ENCODE measurements at regions of chr5 and their contacts with region 1.

Region 1: GRCh38 chr5:154072414-154073171 is 33.8 kb downstream of the MFAP3 start:
- DNase-seq: peak; percentile 19 to 93
- H3K4me3 ChIP-seq: no peak overlapping the region
- H3K27ac ChIP-seq: no peak overlapping the region
- H3K4me1 ChIP-seq: peaks cover 0 to 6% (median 0%) of the 10 kb centered on the region in 4 experiments; a peak in 2 of 7 replicates
- H3K27me3 ChIP-seq: no peaks in the 10 kb centered on the region
- CTCF ChIP-seq: peak; percentile 83 to 96 (median 91)
- EP300 ChIP-seq: no peak
- POLR2A ChIP-seq: no peak
- RAD21 ChIP-seq: peak; percentile 100

Region 2: DNA sequence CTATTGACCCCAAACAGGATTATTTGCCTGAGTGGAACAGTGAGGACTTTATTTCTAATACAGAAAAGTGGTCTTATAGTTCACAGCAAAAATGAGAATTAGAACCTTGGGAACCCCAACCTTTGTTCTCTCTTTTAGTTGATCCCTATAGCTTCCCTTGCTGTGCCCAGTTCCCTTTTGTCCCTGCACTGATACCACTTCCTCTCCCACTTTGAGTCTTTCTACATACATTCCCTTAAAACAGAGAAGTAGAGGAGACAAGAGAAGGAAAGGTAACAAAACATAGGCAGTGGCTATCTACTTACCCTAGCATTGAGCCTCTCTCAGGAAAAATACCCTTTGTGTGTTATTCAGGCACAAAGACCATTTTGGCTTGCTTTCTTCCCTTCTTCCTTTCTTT is 280.3 kb before region 1 on chr5:
- CTCF ChIA-PET with region 1: no interaction called
- POLR2A ChIA-PET with region 1: no interaction called
- DNase-seq: no peak
- H3K4me3 ChIP-seq: no peak overlapping the region
- H3K27ac ChIP-seq: no peak overlapping the region
- H3K4me1 ChIP-seq: no peaks in the 10 kb centered on the region
- H3K27me3 ChIP-seq: no peaks in the 10 kb centered on the region; a peak in 1 of 7 replicates
- CTCF ChIP-seq: no peak
- EP300 ChIP-seq: no peak
- POLR2A ChIP-seq: no peak
- RAD21 ChIP-seq: no peak

Region 3: GRCh38 chr5:153991168-153991567 is 81.4 kb before region 1 on chr5:
- CTCF ChIA-PET with region 1: no interaction called
- POLR2A ChIA-PET with region 1: no interaction called
- DNase-seq: no peak
- H3K4me3 ChIP-seq: no peak overlapping the region
- H3K27ac ChIP-seq: no peak overlapping the region
- H3K4me1 ChIP-seq: no peaks in the 10 kb centered on the region
- H3K27me3 ChIP-seq: no peaks in the 10 kb centered on the region
- CTCF ChIP-seq: no peak
- EP300 ChIP-seq: no peak
- POLR2A ChIP-seq: no peak
- RAD21 ChIP-seq: no peak

Region 4: GRCh38 chr5:154058055-154059038 is 14.2 kb before region 1 on chr5:
- CTCF ChIA-PET with region 1: interaction called, 33 read pairs
- POLR2A ChIA-PET with region 1: interaction called, 9 read pairs
- DNase-seq: no peak
- H3K4me3 ChIP-seq: no peak overlapping the region
- H3K27ac ChIP-seq: no peak overlapping the region
- H3K4me1 ChIP-seq: peaks cover 0 to 19% (median 2%) of the 10 kb centered on the region in 4 experiments; a peak in 2 of 7 replicates
- H3K27me3 ChIP-seq: no peaks in the 10 kb centered on the region; a peak in 1 of 7 replicates
- CTCF ChIP-seq: no peak
- EP300 ChIP-seq: no peak
- POLR2A ChIP-seq: no peak
- RAD21 ChIP-seq: no peak

Region 5: DNA sequence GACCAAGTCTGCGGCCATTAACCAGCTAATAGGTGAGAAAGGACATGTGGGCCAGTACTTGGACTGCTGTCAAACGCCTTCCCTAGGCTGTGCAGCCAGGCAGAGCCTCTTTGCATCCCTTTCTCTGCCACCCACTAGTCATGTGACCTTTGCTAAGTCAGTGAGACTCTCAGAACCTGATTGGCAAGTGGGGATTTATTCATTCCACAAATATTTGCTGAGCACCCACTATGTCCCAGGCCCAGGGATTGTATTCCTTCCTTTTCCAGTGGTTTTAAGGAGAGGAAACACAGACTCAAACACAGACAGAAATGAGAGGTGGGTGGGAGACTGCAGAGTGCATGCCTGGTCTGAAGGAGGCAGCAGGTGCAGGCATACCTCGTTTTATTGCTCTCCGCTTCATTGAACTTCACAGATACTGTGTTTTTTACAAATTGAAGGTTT is 46.3 kb after region 1 on chr5:
- CTCF ChIA-PET with region 1: interaction called, 12 read pairs
- POLR2A ChIA-PET with region 1: no interaction called
- DNase-seq: no peak
- H3K4me3 ChIP-seq: no peak overlapping the region
- H3K27ac ChIP-seq: no peak overlapping the region
- H3K4me1 ChIP-seq: peaks cover 0 to 3% (median 1%) of the 10 kb centered on the region in 4 experiments; a peak in 1 of 7 replicates
- H3K27me3 ChIP-seq: no peaks in the 10 kb centered on the region
- CTCF ChIP-seq: peak in 1 of 3 experiments; percentile 36; a peak in 1 of 4 replicates
- EP300 ChIP-seq: no peak
- POLR2A ChIP-seq: no peak
- RAD21 ChIP-seq: 0 out of 4 replicates have a peak, but pooled peaks of 1 of the 2 experiments have one; percentile 6

Region 6: GRCh38 chr5:154168395-154168794 is 95.8 kb after region 1 on chr5:
- CTCF ChIA-PET with region 1: interaction called, 211 read pairs
- POLR2A ChIA-PET with region 1: interaction called, 4 read pairs
- DNase-seq: no peak
- H3K4me3 ChIP-seq: no peak overlapping the region
- H3K27ac ChIP-seq: no peak overlapping the region
- H3K4me1 ChIP-seq: peaks cover 14 to 21% (median 15%) of the 10 kb centered on the region in 4 experiments
- H3K27me3 ChIP-seq: no peaks in the 10 kb centered on the region
- CTCF ChIP-seq: no peak
- EP300 ChIP-seq: no peak
- POLR2A ChIP-seq: no peak
- RAD21 ChIP-seq: no peak

Region 7: DNA sequence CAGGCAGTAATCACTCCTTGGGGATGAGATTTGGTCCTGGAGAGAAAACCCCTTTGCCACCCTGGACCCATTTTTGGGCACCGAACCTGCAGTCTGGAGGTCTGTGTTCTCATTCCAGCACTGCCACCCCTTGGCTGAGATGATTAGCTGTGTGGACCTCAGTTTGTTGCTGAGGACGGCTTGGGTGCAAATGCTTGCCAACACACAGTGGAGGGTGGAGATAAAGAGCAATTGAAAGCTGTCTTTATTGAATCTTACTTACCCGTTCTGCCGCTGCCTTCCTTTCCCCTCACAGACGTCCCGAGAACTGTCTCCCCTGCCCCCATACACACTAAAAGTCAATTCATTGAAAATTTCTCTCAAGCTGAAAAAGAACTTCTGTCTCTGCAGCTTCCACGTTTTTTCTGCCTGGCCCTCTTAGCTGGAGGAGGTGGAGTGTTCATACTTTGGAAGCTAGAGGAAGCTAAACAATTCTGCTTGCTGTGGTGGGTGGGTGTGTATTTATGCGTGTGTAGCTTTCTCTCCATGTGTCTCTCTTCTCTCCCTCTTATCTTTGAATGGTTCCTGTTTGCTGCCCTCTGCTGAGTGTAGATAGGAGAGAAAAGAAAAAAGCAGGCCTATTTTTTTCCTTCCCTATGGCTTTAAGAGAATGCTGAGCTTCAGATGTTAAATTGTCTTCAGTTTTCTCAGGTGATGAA is 124.5 kb after region 1 on chr5:
- CTCF ChIA-PET with region 1: interaction called, 37 read pairs
- POLR2A ChIA-PET with region 1: no interaction called
- DNase-seq: no peak
- H3K4me3 ChIP-seq: no peak overlapping the region
- H3K27ac ChIP-seq: no peak overlapping the region
- H3K4me1 ChIP-seq: peaks cover 0 to 19% (median 12%) of the 10 kb centered on the region in 4 experiments; a peak in 5 of 7 replicates
- H3K27me3 ChIP-seq: peaks cover 1 to 8% (median 5%) of the 10 kb centered on the region in 4 experiments; a peak in 5 of 7 replicates
- CTCF ChIP-seq: peak in 1 of 3 experiments; percentile 27; a peak in 1 of 4 replicates
- EP300 ChIP-seq: no peak
- POLR2A ChIP-seq: no peak
- RAD21 ChIP-seq: peak; percentile 26 to 40; a peak in 3 of 4 replicates

Region 8: GRCh38 chr5:154405078-154405792 is 332.6 kb after region 1 on chr5:
- CTCF ChIA-PET with region 1: interaction called, 61 read pairs
- POLR2A ChIA-PET with region 1: interaction called, 5 read pairs
- DNase-seq: peak; percentile 60 to 91
- H3K4me3 ChIP-seq: peak overlapping the region in 3 of 4 experiments; percentile 21 to 51 (median 30); a peak in 6 of 8 replicates
- H3K27ac ChIP-seq: no peak overlapping the region
- H3K4me1 ChIP-seq: no peaks in the 10 kb centered on the region
- H3K27me3 ChIP-seq: no peaks in the 10 kb centered on the region; a peak in 1 of 7 replicates
- CTCF ChIP-seq: peak; percentile 86 to 96 (median 93)
- EP300 ChIP-seq: no peak
- POLR2A ChIP-seq: no peak
- RAD21 ChIP-seq: peak; percentile 97 to 100

Region 9: GRCh38 chr5:154461531-154461930 is 388.9 kb after region 1 on chr5:
- CTCF ChIA-PET with region 1: interaction called, 13 read pairs
- POLR2A ChIA-PET with region 1: no interaction called
- DNase-seq: no peak
- H3K4me3 ChIP-seq: no peak overlapping the region
- H3K27ac ChIP-seq: no peak overlapping the region
- H3K4me1 ChIP-seq: peaks cover 0 to 3% (median 0%) of the 10 kb centered on the region in 4 experiments; a peak in 3 of 7 replicates
- H3K27me3 ChIP-seq: peaks cover 0 to 3% (median under 1%) of the 10 kb centered on the region in 4 experiments; a peak in 1 of 7 replicates
- CTCF ChIP-seq: peak; percentile 14 to 53 (median 42); a peak in 3 of 4 replicates
- EP300 ChIP-seq: no peak
- POLR2A ChIP-seq: no peak
- RAD21 ChIP-seq: peak; percentile 52 to 60

Measured in H1 (cell line).